Posterior cingulate gyrus (tissue), 11 donors: ENCODE measurements at regions of chr1 and their contacts with region 1.

Region 1: DNA sequence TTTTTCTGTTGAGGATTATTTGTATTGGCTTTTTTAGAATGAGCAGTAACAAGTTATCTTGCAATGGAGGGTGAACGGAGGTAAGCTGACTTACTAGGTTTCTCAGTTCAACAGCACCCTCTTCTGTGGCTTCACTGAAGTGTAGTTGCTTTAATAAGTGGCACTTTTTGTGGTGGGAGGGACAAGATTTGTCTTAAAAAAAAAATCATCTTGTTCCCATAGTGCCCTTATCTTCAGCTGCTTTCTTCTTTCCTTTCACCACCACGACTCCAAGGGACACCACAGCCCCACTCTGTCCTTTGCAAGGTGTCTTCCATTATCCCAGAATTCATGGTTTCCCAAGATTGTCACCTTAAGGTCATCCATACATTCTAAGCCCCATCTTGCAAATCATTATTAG is 92.9 kb downstream of the PIGK start:
- DNase-seq: peak in 2 of 10 donors; percentile 10

Region 2: DNA sequence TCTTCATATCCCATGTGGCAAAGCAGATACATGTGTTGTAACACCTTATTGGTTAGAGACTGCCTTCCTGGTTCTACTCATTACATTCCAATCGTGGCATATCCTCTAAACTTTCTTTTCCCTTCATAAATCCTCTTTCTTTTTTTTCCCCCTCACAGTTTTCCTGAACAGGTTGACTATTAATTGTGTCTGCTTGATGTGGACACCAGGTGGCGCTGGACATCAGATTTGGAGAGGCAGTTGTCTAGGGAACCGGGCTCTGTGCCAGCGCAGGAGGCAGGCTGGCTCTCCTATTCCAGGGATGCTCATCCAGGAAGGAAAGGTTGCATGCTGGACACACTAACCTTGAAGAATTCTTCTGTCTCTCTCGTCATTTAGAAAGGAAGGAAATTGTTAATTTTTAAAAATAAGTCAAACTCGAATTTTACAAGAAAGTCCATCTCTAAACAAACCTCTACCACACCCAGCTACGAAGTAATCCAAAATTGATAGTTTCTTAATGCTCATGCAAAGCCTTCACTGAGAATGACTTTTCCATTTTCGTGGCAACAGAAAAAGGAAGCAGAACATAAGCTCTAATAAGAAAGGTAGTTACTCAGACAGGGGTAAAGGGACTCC is 1134.7 kb before region 1 on chr1:
- intact Hi-C with region 1: loop called (anchors 5 kb)
- DNase-seq: peak; percentile 79 to 98 (median 95)